Naive thymus-derived CD4-positive, alpha-beta T cell (primary cell): ENCODE measurements at regions of chr5 and their contacts with region 1.

Region 1: GRCh38 chr5:139633295-139634027 is 14.7 kb upstream of the CXXC5 start:
- DNase-seq: peak; percentile 49 to 68 (median 62)
- ATAC-seq: peak; percentile 66
- H3K4me3 ChIP-seq: no peak overlapping the region
- H3K4me3 Mint-ChIP-seq: no peak overlapping the region
- H3K27ac ChIP-seq: no peak overlapping the region
- H3K27ac Mint-ChIP-seq: peak overlapping the region in 6 of 9 donors; percentile 3 to 41 (median 22)
- H3K4me1 ChIP-seq: peaks cover 27 to 28% of the 10 kb centered on the region in 2 donors
- H3K4me1 Mint-ChIP-seq: peaks cover 22 to 40% (median 39%) of the 10 kb centered on the region in 7 donors
- H3K27me3 ChIP-seq: no peaks in the 10 kb centered on the region
- H3K27me3 Mint-ChIP-seq: peaks cover 0 to 5% (median 0%) of the 10 kb centered on the region in 5 donors

Region 2: DNA sequence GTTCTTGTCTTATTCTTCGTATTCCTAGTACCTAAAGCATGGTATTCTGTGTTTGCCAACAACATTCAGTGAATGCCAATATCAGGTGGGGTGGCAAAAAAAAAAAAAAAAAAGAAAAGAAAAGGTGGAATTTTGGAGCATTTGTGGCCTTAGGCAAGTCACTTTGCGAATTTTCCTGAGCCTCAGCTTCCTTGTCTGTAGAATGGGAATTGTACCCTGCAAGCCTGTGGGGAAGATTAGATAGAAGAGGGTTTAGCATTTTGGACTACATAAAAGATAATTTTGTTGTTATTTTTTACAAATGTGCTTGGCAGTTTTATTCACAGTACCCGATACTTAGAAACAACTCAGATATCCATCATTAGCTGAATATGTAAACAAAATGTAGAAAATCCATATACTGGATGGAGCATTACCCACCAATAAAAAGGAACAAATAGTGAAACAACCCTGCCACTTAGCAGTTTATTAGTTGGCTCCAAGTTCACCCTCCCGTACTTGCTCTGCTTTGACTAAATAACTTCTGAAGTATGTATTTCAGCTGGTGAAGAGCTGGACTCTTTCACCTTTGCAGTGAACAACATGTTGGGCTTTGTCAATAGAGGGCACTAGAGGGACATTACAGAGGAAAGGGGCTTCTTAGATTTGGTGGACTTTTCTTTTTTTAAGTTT is 58.7 kb before region 1 on chr5:
- CTCF ChIA-PET with region 1: interaction called, 21 read pairs
- POLR2A ChIA-PET with region 1: interaction called, 4 read pairs
- intact Hi-C with region 1: loop called (anchors 1 to 5 kb)
- DNase-seq: peak in 7 of 9 donors; percentile 27 to 60 (median 47)
- ATAC-seq: peak; percentile 75
- H3K4me3 ChIP-seq: no peak overlapping the region
- H3K4me3 Mint-ChIP-seq: peak overlapping the region in 9 of 10 donors; percentile 11 to 80 (median 53)
- H3K27ac ChIP-seq: peak overlapping the region; percentile 57
- H3K27ac Mint-ChIP-seq: peak overlapping the region; percentile 62 to 96 (median 90)
- H3K4me1 ChIP-seq: peaks cover 61 to 68% of the 10 kb centered on the region in 2 donors
- H3K4me1 Mint-ChIP-seq: peaks cover 56 to 88% (median 74%) of the 10 kb centered on the region in 7 donors
- H3K27me3 ChIP-seq: no peaks in the 10 kb centered on the region
- H3K27me3 Mint-ChIP-seq: no peaks in the 10 kb centered on the region

Region 3: GRCh38 chr5:139651853-139652787 is 18.7 kb after region 1 on chr5:
- CTCF ChIA-PET with region 1: interaction called, 6 read pairs
- POLR2A ChIA-PET with region 1: interaction called, 3 read pairs
- intact Hi-C with region 1: loop called (anchors 1 kb)
- DNase-seq: peak in 3 of 9 donors; percentile 39 to 63 (median 54)
- ATAC-seq: peak; percentile 66
- H3K4me3 ChIP-seq: no peak overlapping the region
- H3K4me3 Mint-ChIP-seq: peak overlapping the region in 6 of 10 donors; percentile 5 to 94 (median 20)
- H3K27ac ChIP-seq: no peak overlapping the region
- H3K27ac Mint-ChIP-seq: peak overlapping the region in 1 of 9 donors; percentile 3
- H3K4me1 ChIP-seq: peaks cover 19 to 33% of the 10 kb centered on the region in 2 donors
- H3K4me1 Mint-ChIP-seq: peaks cover 12 to 44% (median 35%) of the 10 kb centered on the region in 7 donors
- H3K27me3 ChIP-seq: peaks cover 3 to 30% of the 10 kb centered on the region in 2 donors
- H3K27me3 Mint-ChIP-seq: peaks cover 36 to 58% (median 45%) of the 10 kb centered on the region in 5 donors

Region 4: DNA sequence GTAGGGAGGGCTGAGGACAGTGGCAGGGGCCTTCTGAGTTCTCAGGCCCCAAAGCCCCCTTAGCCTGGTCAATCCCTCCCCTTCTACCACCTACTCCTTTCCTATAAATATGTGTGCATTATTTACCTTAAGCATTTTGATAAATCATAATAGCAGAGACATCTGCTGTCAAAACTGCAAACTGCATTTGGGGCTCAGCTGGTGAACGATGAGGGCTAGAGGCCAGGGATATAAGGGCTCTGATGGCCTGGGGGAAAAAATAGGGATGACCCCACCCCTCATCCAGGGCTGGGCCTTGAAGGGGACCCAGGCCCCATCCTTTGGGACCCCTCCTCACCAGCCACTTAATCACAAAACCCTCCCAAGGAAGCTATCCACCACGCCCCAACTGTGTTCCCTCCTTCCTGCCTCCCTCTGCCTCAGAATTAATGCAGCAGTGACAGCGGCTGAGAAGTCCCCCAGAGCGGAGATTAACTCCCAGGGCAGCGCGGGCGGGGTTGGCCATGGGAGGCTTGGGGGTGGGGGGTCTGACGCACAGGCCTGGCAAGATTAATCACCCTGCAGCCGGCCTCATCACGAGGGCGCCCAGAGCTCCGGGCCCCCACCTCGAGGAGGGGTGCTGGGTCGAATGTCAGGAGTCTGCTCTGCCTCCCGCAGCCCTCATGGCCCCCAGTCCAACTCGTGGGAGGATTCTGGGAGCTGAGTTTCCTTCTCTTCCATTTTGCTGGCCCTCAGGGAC is 56.8 kb after region 1 on chr5:
- CTCF ChIA-PET with region 1: interaction called, 41 read pairs
- POLR2A ChIA-PET with region 1: no interaction called
- intact Hi-C with region 1: loop called (anchors 1 kb)
- DNase-seq: peak in 2 of 9 donors; percentile 26 to 27
- ATAC-seq: peak; percentile 59
- H3K4me3 ChIP-seq: no peak overlapping the region
- H3K4me3 Mint-ChIP-seq: no peak overlapping the region
- H3K27ac ChIP-seq: no peak overlapping the region
- H3K27ac Mint-ChIP-seq: no peak overlapping the region
- H3K4me1 ChIP-seq: no peaks in the 10 kb centered on the region
- H3K4me1 Mint-ChIP-seq: peaks cover 3 to 17% (median 6%) of the 10 kb centered on the region in 7 donors
- H3K27me3 ChIP-seq: no peaks in the 10 kb centered on the region
- H3K27me3 Mint-ChIP-seq: peaks cover 0 to 17% (median 0%) of the 10 kb centered on the region in 5 donors

Region 5: DNA sequence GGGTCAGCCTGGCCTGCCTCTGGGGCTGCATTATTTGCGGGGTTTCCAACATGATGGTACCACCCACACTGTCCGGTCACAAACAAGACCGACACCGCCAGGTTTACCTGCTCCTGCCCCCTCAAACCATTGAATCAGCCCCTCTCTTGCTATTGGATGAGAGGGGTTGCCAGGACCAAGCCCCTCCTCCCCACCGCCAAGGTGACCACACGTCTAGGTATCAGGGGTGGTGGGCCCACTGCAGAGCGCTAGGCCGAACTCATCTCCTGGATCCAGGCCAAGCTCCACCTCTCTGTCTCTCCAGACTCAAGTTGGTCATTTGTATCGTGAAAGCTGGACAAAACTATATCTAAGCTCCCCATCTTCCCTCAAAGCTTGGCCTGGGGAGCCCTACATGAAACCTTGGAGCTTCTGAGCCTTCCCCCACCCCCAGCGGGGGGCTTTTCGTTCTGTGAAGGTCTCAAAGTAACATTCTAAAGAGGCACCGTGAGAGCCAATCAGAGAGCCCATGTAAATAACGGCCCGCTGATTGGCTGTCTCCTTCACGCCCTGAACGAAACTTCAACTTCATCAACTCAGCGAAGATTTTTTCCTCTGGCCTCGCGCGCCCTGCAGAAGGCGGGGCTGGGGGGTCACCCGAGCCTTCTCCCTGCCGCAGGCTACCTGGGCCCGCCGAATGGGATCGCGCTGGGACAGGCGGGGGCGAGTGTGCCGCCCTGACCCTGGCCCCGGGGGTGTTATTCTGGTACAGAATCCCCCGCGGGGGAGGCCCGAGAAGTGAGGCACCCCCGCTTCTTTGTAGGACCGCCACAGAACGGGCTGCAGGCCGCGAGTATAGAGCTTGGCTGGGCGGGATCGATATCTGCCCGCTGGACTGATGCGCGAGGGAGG is 112.6 kb after region 1 on chr5:
- CTCF ChIA-PET with region 1: interaction called, 4 read pairs
- POLR2A ChIA-PET with region 1: no interaction called
- intact Hi-C with region 1: loop called in 1 of 2 experiments (anchors 5 kb)
- DNase-seq: peak; percentile 31 to 64 (median 41)
- ATAC-seq: peak; percentile 68
- H3K4me3 ChIP-seq: peak overlapping the region; percentile 79
- H3K4me3 Mint-ChIP-seq: peak overlapping the region; percentile 88 to 100 (median 91)
- H3K27ac ChIP-seq: no peak overlapping the region
- H3K27ac Mint-ChIP-seq: peak overlapping the region in 4 of 9 donors; percentile 13 to 82 (median 52)
- H3K4me1 ChIP-seq: peaks cover 7 to 8% of the 10 kb centered on the region in 2 donors
- H3K4me1 Mint-ChIP-seq: peaks cover 18 to 25% (median 23%) of the 10 kb centered on the region in 7 donors
- H3K27me3 ChIP-seq: no peaks in the 10 kb centered on the region
- H3K27me3 Mint-ChIP-seq: peaks cover 7 to 67% (median 15%) of the 10 kb centered on the region in 5 donors

Region 6: DNA sequence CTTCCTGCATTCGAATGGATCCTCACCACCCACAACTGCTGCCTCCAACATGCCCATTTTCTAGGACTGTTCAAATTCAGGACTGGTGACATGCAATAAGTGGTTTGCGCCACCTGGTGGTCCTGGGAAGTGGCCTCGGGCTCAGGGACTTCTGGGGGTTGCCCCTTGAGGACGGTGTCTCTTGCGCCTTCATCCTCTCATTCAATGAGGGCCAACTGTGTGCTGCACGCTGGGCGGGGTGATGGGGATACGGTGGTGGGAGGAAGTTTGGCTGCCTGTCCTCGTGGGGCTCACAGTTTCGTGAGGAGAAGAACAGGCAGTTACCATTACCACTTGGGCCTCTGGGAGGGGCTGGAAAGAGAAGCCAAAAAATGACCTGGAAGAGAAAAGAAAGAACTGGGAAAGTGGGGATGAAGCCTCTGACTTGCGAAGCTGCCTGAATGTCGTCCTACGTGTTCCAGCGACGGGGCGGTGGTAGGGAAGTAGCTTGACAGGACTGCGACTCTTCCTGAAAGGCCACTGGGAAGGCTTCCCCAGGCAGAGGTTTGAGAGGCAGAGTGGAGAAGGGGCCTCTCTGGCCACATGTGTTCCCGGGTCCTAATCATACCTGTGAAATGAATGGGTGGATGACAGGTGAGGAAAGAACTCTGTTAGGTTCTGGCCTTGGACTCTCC is 211.1 kb after region 1 on chr5:
- CTCF ChIA-PET with region 1: no interaction called
- POLR2A ChIA-PET with region 1: no interaction called
- intact Hi-C with region 1: loop called in 1 of 2 experiments (anchors 10 kb)
- DNase-seq: peak; percentile 26 to 62 (median 57)
- ATAC-seq: peak; percentile 28
- H3K4me3 ChIP-seq: no peak overlapping the region
- H3K4me3 Mint-ChIP-seq: peak overlapping the region in 2 of 10 donors; percentile 21 to 49
- H3K27ac ChIP-seq: no peak overlapping the region
- H3K27ac Mint-ChIP-seq: no peak overlapping the region
- H3K4me1 ChIP-seq: peaks cover 0 to 5% of the 10 kb centered on the region in 2 donors
- H3K4me1 Mint-ChIP-seq: peaks cover 7 to 17% (median 12%) of the 10 kb centered on the region in 7 donors
- H3K27me3 ChIP-seq: no peaks in the 10 kb centered on the region
- H3K27me3 Mint-ChIP-seq: peaks cover 13 to 59% (median 16%) of the 10 kb centered on the region in 5 donors